Body of pancreas (tissue), 4 donors: ENCODE measurements at regions of chr11 and their contacts with region 1.

Region 1: DNA sequence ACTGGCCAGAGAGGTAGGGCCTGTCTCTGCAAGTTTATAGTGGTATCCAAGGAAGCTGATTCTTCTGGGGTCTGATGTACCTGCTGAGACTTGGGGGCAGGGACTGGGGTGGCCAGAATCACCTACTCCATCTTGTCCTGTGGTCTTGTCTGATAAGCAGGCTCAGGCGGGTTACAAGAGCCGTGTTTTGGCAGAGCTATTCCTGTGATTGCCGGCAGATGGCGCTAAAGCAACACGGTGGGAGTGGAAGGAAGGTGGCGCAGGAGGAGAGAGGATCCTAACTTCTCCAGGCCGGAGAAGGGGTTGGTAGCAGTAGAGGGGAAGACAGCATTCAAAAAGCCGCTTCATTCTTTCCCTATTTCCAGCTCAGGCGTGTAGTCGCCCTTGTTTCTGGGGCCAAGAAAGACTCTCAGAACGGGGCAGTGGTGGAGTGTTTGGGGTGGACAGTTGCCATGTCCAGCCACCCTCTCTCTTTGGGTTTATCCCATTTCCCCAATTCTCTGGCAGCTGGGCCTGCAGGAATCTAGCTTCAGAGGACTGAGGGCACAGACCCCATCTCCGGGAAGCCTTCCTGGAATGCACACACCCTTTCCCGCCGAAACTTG is 15.1 kb downstream of the CHRM1 start:
- DNase-seq: peak; percentile 78 to 86 (median 83)
- ATAC-seq: peak; percentile 49
- H3K4me3 ChIP-seq: no peak overlapping the region
- H3K27ac ChIP-seq: no peak overlapping the region
- H3K4me1 ChIP-seq: peaks cover 24% of the 10 kb centered on the region
- H3K27me3 ChIP-seq: no peaks in the 10 kb centered on the region
- CTCF ChIP-seq: peak; percentile 94 to 99 (median 98)
- POLR2A ChIP-seq: no peak

Region 2: DNA sequence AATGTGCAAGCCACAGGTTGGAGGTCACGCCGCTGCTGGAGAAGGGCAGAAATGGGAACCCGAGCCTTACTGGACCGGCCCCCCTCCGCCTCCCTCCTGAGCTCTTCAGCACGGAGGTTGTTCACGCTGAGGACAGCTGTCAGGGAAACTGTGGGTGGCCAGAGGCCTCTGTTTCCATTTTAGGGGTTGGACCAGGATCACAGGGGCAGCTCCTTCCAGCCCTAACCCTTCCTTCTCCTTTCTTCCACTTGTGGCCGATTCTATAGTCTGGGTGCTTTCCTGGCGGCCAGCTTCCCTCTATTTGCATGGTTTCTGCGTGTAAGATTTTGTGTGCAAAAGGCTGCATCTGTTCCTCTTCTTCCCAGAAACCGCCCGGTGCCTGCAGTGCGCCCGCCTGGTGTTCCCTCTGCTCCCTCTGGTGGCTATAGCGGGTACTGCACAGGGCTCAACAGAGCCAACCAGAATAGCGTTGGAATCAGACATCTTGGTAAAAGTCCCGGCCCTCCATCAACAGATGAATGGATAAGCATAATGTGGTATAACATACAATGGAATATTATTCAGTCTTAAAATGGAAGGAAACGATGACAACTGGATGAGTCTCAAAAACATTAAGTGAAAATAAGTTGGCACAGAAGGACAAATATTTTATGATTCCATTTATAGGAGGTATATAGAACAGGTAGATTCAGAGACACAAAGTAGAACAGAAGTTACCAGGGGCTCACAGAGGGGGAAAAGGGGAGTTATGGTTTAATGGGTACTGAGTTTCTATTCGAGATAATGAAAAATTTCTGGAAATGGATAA is 118.0 kb after region 1 on chr11:
- intact Hi-C with region 1: loop called (anchors 5 kb)
- DNase-seq: peak; percentile 88 to 94 (median 90)
- ATAC-seq: peak; percentile 93
- H3K4me3 ChIP-seq: no peak overlapping the region
- H3K27ac ChIP-seq: no peak overlapping the region
- H3K4me1 ChIP-seq: no peaks in the 10 kb centered on the region
- H3K27me3 ChIP-seq: no peaks in the 10 kb centered on the region
- CTCF ChIP-seq: peak; percentile 97 to 100 (median 98)
- POLR2A ChIP-seq: no peak

Region 3: DNA sequence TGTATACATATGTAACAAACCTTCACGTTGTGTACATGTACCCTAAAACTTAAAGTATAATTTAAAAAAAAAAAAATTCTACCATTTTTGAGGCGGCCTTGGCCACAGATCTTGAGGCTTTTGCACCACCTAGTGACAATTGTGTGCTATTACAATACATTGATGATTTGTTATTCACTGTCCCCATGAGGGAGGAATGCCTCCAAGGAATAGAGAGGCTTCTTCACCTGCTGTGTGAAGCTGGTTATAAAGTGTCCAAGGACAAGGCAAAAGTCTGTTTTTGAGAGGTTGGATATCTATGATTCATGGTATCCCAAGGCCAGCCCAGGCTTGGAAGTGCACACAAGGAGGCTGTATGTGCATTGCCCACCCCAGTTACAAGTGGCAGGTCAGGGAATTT is 306.7 kb after region 1 on chr11:
- intact Hi-C with region 1: loop called (anchors 10 kb)
- DNase-seq: peak in 1 of 4 donors; percentile 22
- ATAC-seq: no peak
- H3K4me3 ChIP-seq: no peak overlapping the region
- H3K27ac ChIP-seq: no peak overlapping the region
- H3K4me1 ChIP-seq: peaks cover 4% of the 10 kb centered on the region
- H3K27me3 ChIP-seq: no peaks in the 10 kb centered on the region
- CTCF ChIP-seq: peak in 6 of 7 experiments; percentile 30 to 63 (median 52)
- POLR2A ChIP-seq: no peak